ENCODE measurements at regions of chr2 and their contacts with region 1.

Region 1: DNA sequence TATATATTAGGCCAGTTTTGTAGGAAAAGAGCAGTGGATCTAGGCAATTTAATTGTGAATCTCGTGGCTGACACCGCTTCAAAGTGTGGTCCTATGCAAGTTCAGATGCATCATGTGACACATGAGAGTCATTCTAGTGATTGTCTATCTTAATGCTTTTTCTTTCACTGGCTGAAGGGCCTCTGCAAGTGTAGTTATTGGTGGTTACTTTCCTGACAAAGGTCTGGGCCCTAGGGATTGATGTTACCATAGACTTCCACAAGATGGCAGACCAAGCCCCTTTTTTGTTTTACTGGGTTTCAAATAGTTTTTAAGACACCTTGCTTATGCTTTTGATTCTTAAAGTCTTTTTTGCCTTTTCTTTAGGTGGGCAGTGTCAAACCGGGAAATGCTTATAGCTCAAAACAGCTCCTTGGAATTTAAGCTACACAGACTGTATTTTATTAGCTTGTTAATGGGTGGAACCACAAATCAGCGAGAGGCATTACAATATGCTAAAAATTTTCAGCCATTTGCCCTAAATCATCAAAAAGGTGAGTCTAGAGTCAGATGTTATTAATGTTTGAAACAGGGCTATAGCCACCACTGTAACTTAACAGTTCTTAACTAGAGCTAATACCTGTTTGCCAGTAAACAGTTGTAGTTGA is 25.9 kb downstream of the CD8A start:
- DNase-seq: no peak
- H3K4me3 ChIP-seq: no peak overlapping the region
- CTCF ChIP-seq: peak; percentile 63

Region 2: GRCh38 chr2:86686905-86687304 is 77.9 kb before region 1 on chr2:
- CTCF ChIA-PET with region 1: no interaction called
- POLR2A ChIA-PET with region 1: no interaction called
- DNase-seq: no peak
- H3K4me3 ChIP-seq: no peak overlapping the region
- CTCF ChIP-seq: no peak

Region 3: GRCh38 chr2:86747711-86748639 is 16.8 kb before region 1 on chr2:
- CTCF ChIA-PET with region 1: interaction called, 52 read pairs
- POLR2A ChIA-PET with region 1: no interaction called
- DNase-seq: peak; percentile 59
- H3K4me3 ChIP-seq: no peak overlapping the region
- CTCF ChIP-seq: no peak

Region 4: DNA sequence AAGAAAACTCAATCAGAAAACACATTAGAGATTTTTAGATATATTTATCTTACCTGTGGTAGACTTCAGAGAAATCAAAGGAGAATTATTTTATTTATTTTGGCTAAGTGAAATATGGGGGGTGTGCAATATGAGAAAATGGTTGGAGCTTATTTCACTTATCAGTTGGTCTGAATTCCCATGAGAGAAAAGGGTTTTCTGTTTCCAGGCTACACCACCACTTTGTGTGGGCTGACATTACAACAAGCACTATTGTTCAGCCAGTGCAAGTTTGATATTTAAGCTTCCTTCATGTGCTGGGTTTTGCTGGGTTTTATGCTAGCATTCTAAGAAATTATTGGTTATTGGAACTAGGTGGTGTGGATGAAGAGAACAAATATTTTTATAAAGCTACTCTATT is 11.2 kb before region 1 on chr2:
- CTCF ChIA-PET with region 1: interaction called, 52 read pairs
- POLR2A ChIA-PET with region 1: no interaction called
- DNase-seq: no peak
- H3K4me3 ChIP-seq: no peak overlapping the region
- CTCF ChIP-seq: no peak

Region 5: DNA sequence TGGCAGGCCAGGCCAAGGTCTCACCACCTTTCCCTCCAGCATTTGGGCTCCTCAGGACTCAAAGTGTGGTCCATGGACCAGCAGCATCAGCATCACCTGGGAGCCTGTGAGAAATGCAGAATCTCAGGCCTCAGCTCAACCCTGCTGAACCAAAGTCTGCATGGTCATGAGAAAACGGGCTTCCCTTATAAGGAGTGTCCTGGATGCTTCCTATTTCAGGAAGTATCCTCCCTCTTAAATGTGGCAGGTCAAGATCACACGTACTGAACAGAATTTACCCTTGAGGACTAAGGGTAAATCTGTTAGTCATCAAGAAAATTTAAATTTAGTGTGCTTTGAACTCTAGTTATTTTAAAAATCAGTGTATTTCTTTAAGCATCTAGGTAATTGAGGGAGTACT is 14.2 kb after region 1 on chr2:
- CTCF ChIA-PET with region 1: interaction called, 41 read pairs
- POLR2A ChIA-PET with region 1: no interaction called
- DNase-seq: no peak
- H3K4me3 ChIP-seq: no peak overlapping the region
- CTCF ChIP-seq: no peak

Measured in AG04449 (cell line).